CD8-positive, alpha-beta T cell (primary cell): ENCODE measurements at regions of chr2 and their contacts with region 1.

Region 1: DNA sequence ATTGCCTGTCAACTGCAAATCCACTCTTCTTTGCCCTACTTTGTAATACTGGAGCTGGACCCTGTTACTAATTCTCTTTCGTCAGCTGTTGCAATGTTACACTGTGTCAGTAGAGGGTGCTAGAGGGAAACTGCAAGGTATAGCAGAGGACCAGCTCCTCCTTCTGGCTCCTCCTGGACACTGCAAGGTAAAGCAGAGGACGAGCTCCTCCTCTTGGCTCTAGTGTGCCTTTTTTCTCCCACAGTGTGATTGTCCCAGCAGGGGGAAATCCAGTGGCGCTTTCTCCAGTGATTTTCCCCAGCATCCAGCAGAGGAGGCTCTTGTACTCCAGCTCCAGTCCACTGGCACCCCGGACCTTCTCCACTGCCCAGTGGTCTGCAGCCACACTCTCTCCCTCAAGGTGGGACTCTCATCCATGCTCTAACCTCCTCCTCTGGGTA is 95.6 kb downstream of the CAPN13 start:
- DNase-seq: peak; percentile 63 to 92 (median 83)
- ATAC-seq: peak; percentile 95
- H3K4me3 ChIP-seq: no peak overlapping the region
- H3K4me3 Mint-ChIP-seq: no peak overlapping the region
- H3K27ac ChIP-seq: no peak overlapping the region
- H3K27ac Mint-ChIP-seq: no peak overlapping the region
- H3K4me1 ChIP-seq: no peaks in the 10 kb centered on the region
- H3K4me1 Mint-ChIP-seq: peaks cover 4% of the 10 kb centered on the region
- H3K27me3 ChIP-seq: no peaks in the 10 kb centered on the region
- H3K27me3 Mint-ChIP-seq: peaks cover 3% of the 10 kb centered on the region
- CTCF ChIP-seq: peak; percentile 100

Region 2: DNA sequence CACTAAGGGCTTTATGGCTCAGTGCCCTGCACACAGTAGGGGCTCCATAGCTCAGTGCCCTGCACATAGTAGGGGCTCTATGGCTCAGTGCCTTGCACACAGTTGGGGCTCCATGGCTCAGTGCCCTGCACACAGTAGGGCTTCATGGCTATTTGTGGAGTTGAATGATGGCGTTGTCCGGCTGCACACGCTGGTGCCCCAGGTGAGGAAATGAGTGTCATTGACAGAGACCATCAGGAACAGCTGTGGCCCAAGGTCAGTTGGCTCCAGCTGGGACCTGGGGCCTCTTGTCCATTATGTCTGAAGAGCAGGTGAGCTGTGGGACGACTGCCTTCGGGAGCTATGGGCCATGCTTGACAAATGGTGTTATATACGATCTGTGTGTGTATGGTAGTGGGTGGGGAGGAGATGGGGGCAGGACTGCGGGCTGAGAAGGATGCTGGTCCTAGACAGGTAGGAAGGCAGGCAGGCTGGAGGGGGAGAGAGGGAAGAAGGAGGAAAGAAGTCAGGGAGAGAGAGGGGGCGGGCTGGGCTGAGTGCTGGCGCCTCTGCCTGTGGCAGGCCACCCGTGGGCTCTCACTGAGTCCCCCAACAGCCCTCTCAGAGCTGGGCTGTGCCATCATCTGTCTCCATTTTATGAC is 1465.8 kb before region 1 on chr2:
- CTCF ChIA-PET with region 1: no interaction called
- POLR2A ChIA-PET with region 1: no interaction called
- intact Hi-C with region 1: no loop called
- DNase-seq: no peak
- ATAC-seq: no peak
- H3K4me3 ChIP-seq: no peak overlapping the region
- H3K4me3 Mint-ChIP-seq: no peak overlapping the region
- H3K27ac ChIP-seq: no peak overlapping the region
- H3K27ac Mint-ChIP-seq: no peak overlapping the region
- H3K4me1 ChIP-seq: no peaks in the 10 kb centered on the region
- H3K4me1 Mint-ChIP-seq: no peaks in the 10 kb centered on the region
- H3K27me3 ChIP-seq: no peaks in the 10 kb centered on the region
- H3K27me3 Mint-ChIP-seq: peaks cover 6% of the 10 kb centered on the region
- CTCF ChIP-seq: no peak

Region 3: GRCh38 chr2:30146438-30147147 is 565.1 kb before region 1 on chr2 and contains the start of gene YPEL5:
- CTCF ChIA-PET with region 1: interaction called, 13 read pairs
- POLR2A ChIA-PET with region 1: interaction called, 4 read pairs
- intact Hi-C with region 1: no loop called
- DNase-seq: peak; percentile 99 to 100 (median 100)
- ATAC-seq: peak; percentile 82
- H3K4me3 ChIP-seq: peak within 1 kb of the TSS; percentile 75 to 76
- H3K4me3 Mint-ChIP-seq: peak within 1 kb of the TSS; percentile 89
- H3K27ac ChIP-seq: peak within 1 kb of the TSS; percentile 97 to 100
- H3K27ac Mint-ChIP-seq: peak within 1 kb of the TSS; percentile 100
- H3K4me1 ChIP-seq: peaks cover 50% of the 10 kb centered on the region
- H3K4me1 Mint-ChIP-seq: peaks cover 60% of the 10 kb centered on the region
- H3K27me3 ChIP-seq: no peaks in the 10 kb centered on the region
- H3K27me3 Mint-ChIP-seq: no peaks in the 10 kb centered on the region
- CTCF ChIP-seq: no peak
- total RNA-seq, gene YPEL5: 1,051 to 1,071 TPM

Region 4: GRCh38 chr2:30208452-30208851 is 503.2 kb before region 1 on chr2:
- CTCF ChIA-PET with region 1: interaction called, 264 read pairs
- POLR2A ChIA-PET with region 1: interaction called, 5 read pairs
- intact Hi-C with region 1: loop called (anchors 1 kb)
- DNase-seq: peak in 6 of 9 experiments; percentile 37 to 73 (median 55)
- ATAC-seq: peak; percentile 59
- H3K4me3 ChIP-seq: peak overlapping the region in 1 of 2 experiments; percentile 1
- H3K4me3 Mint-ChIP-seq: peak overlapping the region; percentile 59
- H3K27ac ChIP-seq: peak overlapping the region in 1 of 2 experiments; percentile 40
- H3K27ac Mint-ChIP-seq: peak overlapping the region; percentile 82
- H3K4me1 ChIP-seq: peaks cover 25% of the 10 kb centered on the region
- H3K4me1 Mint-ChIP-seq: peaks cover 26% of the 10 kb centered on the region
- H3K27me3 ChIP-seq: no peaks in the 10 kb centered on the region
- H3K27me3 Mint-ChIP-seq: no peaks in the 10 kb centered on the region
- CTCF ChIP-seq: peak; percentile 81

Region 5: DNA sequence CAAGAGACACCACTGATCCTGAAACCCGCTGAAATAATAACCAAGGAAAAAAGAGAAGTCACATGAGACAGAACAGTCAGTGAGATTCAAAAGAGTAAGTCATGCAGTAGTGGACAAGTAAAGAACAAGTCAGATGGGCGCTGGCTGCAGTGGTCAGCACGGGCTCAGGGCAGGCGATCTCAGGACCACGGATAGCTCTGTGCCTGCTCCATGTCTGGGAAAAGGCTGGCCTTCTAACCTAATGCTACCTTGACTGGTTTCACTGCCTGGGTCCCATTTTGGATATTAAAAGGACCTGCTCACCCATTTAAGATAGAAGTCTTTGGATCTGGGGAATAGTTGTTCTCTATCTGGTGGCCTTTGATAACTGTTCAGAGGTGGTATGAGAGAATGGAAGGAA is 326.3 kb before region 1 on chr2:
- CTCF ChIA-PET with region 1: no interaction called
- POLR2A ChIA-PET with region 1: no interaction called
- intact Hi-C with region 1: loop called in 1 of 2 experiments (anchors 10 kb)
- DNase-seq: no peak
- ATAC-seq: no peak
- H3K4me3 ChIP-seq: no peak overlapping the region
- H3K4me3 Mint-ChIP-seq: no peak overlapping the region
- H3K27ac ChIP-seq: no peak overlapping the region
- H3K27ac Mint-ChIP-seq: no peak overlapping the region
- H3K4me1 ChIP-seq: peaks cover 3% of the 10 kb centered on the region
- H3K4me1 Mint-ChIP-seq: peaks cover 9% of the 10 kb centered on the region
- H3K27me3 ChIP-seq: no peaks in the 10 kb centered on the region
- H3K27me3 Mint-ChIP-seq: no peaks in the 10 kb centered on the region
- CTCF ChIP-seq: no peak

Region 6: GRCh38 chr2:30691948-30692828 is 19.5 kb before region 1 on chr2:
- CTCF ChIA-PET with region 1: interaction called, 35 read pairs
- POLR2A ChIA-PET with region 1: no interaction called
- intact Hi-C with region 1: no loop called
- DNase-seq: peak in 1 of 9 experiments; percentile 42
- ATAC-seq: no peak
- H3K4me3 ChIP-seq: no peak overlapping the region
- H3K4me3 Mint-ChIP-seq: no peak overlapping the region
- H3K27ac ChIP-seq: no peak overlapping the region
- H3K27ac Mint-ChIP-seq: no peak overlapping the region
- H3K4me1 ChIP-seq: no peaks in the 10 kb centered on the region
- H3K4me1 Mint-ChIP-seq: no peaks in the 10 kb centered on the region
- H3K27me3 ChIP-seq: peaks cover 0 to 4% of the 10 kb centered on the region in 2 experiments
- H3K27me3 Mint-ChIP-seq: peaks cover 2% of the 10 kb centered on the region
- CTCF ChIP-seq: no peak

Region 7: GRCh38 chr2:30770816-30771576 is 59.3 kb after region 1 on chr2:
- CTCF ChIA-PET with region 1: no interaction called
- POLR2A ChIA-PET with region 1: no interaction called
- intact Hi-C with region 1: no loop called
- DNase-seq: peak in 1 of 9 experiments; percentile 4
- ATAC-seq: no peak
- H3K4me3 ChIP-seq: no peak overlapping the region
- H3K4me3 Mint-ChIP-seq: no peak overlapping the region
- H3K27ac ChIP-seq: no peak overlapping the region
- H3K27ac Mint-ChIP-seq: no peak overlapping the region
- H3K4me1 ChIP-seq: peaks cover 3% of the 10 kb centered on the region
- H3K4me1 Mint-ChIP-seq: peaks cover 4% of the 10 kb centered on the region
- H3K27me3 ChIP-seq: no peaks in the 10 kb centered on the region
- H3K27me3 Mint-ChIP-seq: peaks cover 9% of the 10 kb centered on the region
- CTCF ChIP-seq: no peak

Region 8: GRCh38 chr2:31170071-31170698 is 458.5 kb after region 1 on chr2:
- CTCF ChIA-PET with region 1: interaction called, 60 read pairs
- POLR2A ChIA-PET with region 1: no interaction called
- intact Hi-C with region 1: loop called in 1 of 2 experiments (anchors 1 kb)
- DNase-seq: peak in 8 of 9 experiments; percentile 18 to 69 (median 40)
- ATAC-seq: peak; percentile 58
- H3K4me3 ChIP-seq: no peak overlapping the region
- H3K4me3 Mint-ChIP-seq: no peak overlapping the region
- H3K27ac ChIP-seq: no peak overlapping the region
- H3K27ac Mint-ChIP-seq: no peak overlapping the region
- H3K4me1 ChIP-seq: no peaks in the 10 kb centered on the region
- H3K4me1 Mint-ChIP-seq: no peaks in the 10 kb centered on the region
- H3K27me3 ChIP-seq: no peaks in the 10 kb centered on the region
- H3K27me3 Mint-ChIP-seq: no peaks in the 10 kb centered on the region
- CTCF ChIP-seq: peak; percentile 80

Region 9: DNA sequence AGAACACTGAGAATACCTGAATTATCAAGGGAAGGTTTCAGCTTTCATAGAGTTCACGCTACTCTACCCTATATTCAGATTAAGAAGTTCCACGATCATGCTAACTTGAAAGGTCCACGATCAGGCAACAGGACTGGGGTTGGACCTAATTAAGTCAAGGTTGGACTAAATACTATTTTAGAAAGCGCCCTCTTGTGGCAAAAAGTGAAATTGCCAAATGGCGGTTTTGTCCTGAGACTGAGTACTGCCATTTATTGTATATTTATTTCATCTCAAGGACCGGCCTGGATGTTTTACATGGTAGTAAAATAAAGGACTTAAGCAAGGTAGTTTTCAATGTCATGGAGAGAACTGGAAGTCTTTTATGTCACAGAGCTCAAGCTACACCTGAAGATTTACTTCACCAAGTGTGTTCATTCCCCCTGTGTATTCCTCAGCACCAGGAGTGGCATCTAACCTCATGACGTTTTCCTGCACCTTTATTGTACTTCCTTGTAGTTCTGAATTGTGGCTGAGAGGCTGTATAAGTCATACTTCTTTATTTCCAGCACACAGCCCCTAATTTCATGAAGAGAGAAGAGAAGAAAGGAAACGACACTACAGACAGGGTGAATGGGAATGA is 812.3 kb after region 1 on chr2:
- CTCF ChIA-PET with region 1: interaction called, 19 read pairs
- POLR2A ChIA-PET with region 1: no interaction called
- intact Hi-C with region 1: loop called in 1 of 2 experiments (anchors 1 kb)
- DNase-seq: peak; percentile 10 to 59 (median 51)
- ATAC-seq: no peak
- H3K4me3 ChIP-seq: no peak overlapping the region
- H3K4me3 Mint-ChIP-seq: no peak overlapping the region
- H3K27ac ChIP-seq: no peak overlapping the region
- H3K27ac Mint-ChIP-seq: no peak overlapping the region
- H3K4me1 ChIP-seq: no peaks in the 10 kb centered on the region
- H3K4me1 Mint-ChIP-seq: no peaks in the 10 kb centered on the region
- H3K27me3 ChIP-seq: no peaks in the 10 kb centered on the region
- H3K27me3 Mint-ChIP-seq: peaks cover 13% of the 10 kb centered on the region
- CTCF ChIP-seq: peak; percentile 79